Activated naive CD8-positive, alpha-beta T cell treated with anti-CD3 and anti-CD28 coated beads, Interleukin-2, amount 10 ng/mL, durations not matched to agents 7 days and 5 days (primary cell): ENCODE measurements at regions of chr21 and their contacts with region 1.

Region 1: DNA sequence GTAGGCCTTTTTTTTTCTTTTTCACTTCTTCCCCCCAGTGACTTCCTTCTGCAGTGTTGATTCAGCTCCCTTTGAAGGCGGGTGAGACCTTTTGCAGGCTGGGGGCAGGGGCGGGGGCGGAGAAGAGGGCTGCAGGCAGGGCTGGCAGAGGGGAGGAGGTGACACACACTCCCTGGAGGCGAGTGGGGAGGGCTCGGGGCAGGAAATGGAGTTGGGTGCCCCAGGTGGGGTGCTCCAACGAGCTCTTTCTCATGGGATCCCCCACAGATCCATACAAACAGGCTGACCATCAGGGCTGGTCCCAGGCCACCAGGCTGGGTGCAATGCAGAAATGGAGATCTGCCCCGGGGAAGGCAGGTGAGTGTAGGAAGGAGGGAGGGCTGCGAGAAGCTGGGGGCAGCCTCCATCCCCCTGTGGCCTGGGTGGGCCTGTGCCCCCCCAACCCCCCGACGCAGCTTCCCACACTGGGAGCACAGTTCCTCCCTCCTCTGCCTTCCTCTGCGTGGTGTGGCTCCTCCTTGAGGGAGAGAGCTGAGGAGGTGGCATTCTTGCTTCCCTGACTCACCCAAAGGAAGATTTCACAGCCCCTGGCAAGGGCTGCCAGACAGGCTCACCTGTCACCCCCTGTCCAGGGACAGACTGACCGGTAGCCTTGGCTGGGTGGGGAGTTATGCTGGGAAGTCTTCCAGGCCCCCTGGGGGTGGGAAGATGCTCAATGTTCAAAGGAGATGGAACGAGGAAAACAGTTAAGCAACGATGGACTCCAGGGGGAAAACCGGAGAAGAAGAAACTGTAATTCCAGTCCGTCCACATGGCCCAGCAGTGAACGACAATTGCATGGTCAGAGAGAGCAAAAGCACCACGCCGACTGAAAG is 7.1 kb upstream of the ITGB2 start:
- DNase-seq: peak; percentile 73
- ATAC-seq: peak; percentile 77
- H3K4me3 Mint-ChIP-seq: peak overlapping the region; percentile 83
- H3K27ac Mint-ChIP-seq: peak overlapping the region; percentile 91
- H3K4me1 Mint-ChIP-seq: peaks cover 70% of the 10 kb centered on the region
- H3K27me3 Mint-ChIP-seq: no peaks in the 10 kb centered on the region

Region 2: GRCh38 chr21:44801468-44802395 is 126.1 kb before region 1 on chr21 and contains the start of gene UBE2G2:
- POLR2A ChIA-PET with region 1: interaction called, 22 read pairs
- DNase-seq: peak; percentile 94
- ATAC-seq: peak; percentile 94
- H3K4me3 Mint-ChIP-seq: peak within 1 kb of the TSS; percentile 99
- H3K27ac Mint-ChIP-seq: peak within 1 kb of the TSS; percentile 87
- H3K4me1 Mint-ChIP-seq: peaks cover 38% of the 10 kb centered on the region
- H3K27me3 Mint-ChIP-seq: no peaks in the 10 kb centered on the region
- total RNA-seq, gene UBE2G2: 111 TPM

Region 3: GRCh38 chr21:44836666-44837471 is 91.0 kb before region 1 on chr21:
- POLR2A ChIA-PET with region 1: no interaction called
- DNase-seq: no peak
- ATAC-seq: no peak
- H3K4me3 Mint-ChIP-seq: no peak overlapping the region
- H3K27ac Mint-ChIP-seq: no peak overlapping the region
- H3K4me1 Mint-ChIP-seq: no peaks in the 10 kb centered on the region
- H3K27me3 Mint-ChIP-seq: no peaks in the 10 kb centered on the region

Region 4: GRCh38 chr21:44880762-44881585 is 46.9 kb before region 1 on chr21:
- POLR2A ChIA-PET with region 1: interaction called, 15 read pairs
- DNase-seq: no peak
- ATAC-seq: peak; percentile 35
- H3K4me3 Mint-ChIP-seq: peak overlapping the region; percentile 9
- H3K27ac Mint-ChIP-seq: peak overlapping the region; percentile 78
- H3K4me1 Mint-ChIP-seq: peaks cover 18% of the 10 kb centered on the region
- H3K27me3 Mint-ChIP-seq: peaks cover 7% of the 10 kb centered on the region

Region 5: DNA sequence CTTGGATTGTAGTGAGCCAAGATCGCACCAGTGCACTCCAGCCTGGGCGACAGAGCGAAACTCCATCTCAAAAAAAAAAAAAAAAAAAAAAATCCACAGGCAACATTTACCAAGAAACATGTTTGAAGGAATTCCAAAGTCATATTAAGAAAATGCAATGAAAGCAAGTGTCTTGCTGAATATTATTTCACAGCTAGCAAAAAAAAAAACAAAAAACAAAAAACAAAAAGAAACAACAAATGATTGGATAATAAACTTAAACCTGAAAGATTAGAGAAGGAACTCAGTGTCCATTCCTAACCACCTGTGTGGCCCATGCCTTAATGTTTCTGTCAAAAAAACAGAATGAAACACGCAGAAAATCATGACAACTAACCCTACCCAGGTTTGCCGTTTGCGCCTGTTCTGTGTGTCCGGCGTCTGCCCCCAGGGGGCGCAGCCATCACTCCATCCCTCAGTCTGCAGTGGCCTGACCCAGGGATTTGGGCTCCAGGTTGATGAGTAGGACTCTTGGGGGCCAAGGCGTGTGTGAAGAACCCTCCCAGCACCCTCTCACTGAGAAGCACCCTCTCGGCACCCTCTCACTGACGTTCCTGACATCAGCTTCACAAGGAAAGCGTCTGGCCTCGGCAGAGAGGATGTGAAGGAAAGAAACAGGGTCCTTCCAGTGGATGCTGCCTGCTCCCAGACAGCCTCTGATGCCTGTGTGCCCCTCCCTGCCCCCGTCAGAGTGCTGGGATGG is 35.1 kb before region 1 on chr21:
- POLR2A ChIA-PET with region 1: interaction called, 27 read pairs
- DNase-seq: peak; percentile 85
- ATAC-seq: peak; percentile 79
- H3K4me3 Mint-ChIP-seq: no peak overlapping the region
- H3K27ac Mint-ChIP-seq: peak overlapping the region; percentile 67
- H3K4me1 Mint-ChIP-seq: peaks cover 7% of the 10 kb centered on the region
- H3K27me3 Mint-ChIP-seq: no peaks in the 10 kb centered on the region

Region 6: GRCh38 chr21:44911389-44912157 is 16.3 kb before region 1 on chr21:
- POLR2A ChIA-PET with region 1: interaction called, 165 read pairs
- DNase-seq: peak; percentile 79
- ATAC-seq: peak; percentile 61
- H3K4me3 Mint-ChIP-seq: peak overlapping the region; percentile 83
- H3K27ac Mint-ChIP-seq: peak overlapping the region; percentile 97
- H3K4me1 Mint-ChIP-seq: peaks cover 38% of the 10 kb centered on the region
- H3K27me3 Mint-ChIP-seq: no peaks in the 10 kb centered on the region

Region 7: DNA sequence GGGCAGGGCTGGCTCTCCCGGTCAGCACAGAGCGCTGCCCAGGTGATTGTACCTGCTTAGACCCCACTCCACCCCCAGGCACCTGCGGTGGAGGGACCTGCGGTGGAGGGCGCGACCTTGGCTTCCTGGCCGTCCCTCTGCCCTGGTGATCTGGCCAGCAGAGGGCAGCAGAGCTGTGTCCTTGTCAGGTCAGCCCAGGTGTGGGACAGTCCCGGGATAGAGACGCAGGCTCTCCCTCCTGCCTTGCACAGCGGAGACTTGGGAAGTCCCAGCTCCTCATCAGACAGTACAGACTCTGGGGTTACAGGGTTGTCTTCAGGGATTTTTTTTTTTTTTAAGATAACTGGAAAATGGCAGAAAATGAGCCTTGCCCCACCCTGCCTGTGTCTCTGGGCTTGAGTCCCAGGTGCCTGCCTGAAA is 22.0 kb after region 1 on chr21:
- POLR2A ChIA-PET with region 1: no interaction called
- DNase-seq: peak; percentile 88
- ATAC-seq: peak; percentile 85
- H3K4me3 Mint-ChIP-seq: no peak overlapping the region
- H3K27ac Mint-ChIP-seq: peak overlapping the region; percentile 6
- H3K4me1 Mint-ChIP-seq: peaks cover 4% of the 10 kb centered on the region
- H3K27me3 Mint-ChIP-seq: no peaks in the 10 kb centered on the region